CD14-positive monocyte (primary cell): ENCODE measurements at regions of chr16 and their contacts with region 1.

Region 1: DNA sequence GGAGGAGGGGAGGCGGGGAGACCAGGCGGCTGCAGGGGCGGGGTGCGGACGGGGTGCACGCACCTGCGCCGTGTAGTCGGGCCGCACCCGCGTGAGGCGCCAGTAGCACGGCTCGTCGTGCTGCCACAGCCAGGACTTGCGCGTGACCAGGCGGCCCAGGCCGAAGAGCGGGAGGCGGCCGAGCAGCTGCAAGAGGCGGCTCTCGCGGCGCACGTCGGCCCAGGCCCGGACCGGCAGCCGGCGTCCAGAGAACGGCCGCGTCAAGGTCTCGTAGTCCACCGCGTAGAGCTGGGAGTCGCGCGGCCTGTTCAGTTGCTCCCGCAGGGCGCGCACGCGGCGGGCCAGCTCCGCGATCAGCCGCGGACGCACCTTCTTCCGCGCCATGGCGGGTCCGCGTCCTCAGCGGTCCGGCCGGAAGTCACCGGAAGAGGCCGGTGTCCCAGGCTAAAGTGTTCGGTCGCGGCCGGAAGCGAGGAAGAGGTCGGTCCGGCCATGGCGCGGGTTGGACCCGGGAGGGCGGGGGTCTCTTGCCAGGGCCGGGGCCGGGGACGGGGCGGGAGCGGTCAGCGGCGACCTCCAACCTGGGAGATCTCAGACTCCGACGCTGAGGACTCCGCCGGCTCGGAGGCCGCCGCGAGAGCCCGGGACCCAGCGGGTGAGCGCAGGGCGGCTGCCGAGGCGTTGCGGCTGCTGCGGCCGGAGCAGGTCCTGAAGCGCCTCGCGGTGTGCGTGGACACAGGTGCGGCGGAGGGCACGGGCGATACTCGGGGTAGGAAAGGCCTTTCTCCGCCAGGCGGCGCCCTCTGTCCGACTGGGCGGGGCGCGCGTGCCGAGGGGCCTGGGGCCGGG is at the starts of genes EME2 and MRPS34:
- DNase-seq: peak; percentile 72 to 77 (median 76)
- H3K4me3 ChIP-seq: peak within 1 kb of the TSS; percentile 78 to 99 (median 89)
- H3K4me3 Mint-ChIP-seq: peak within 1 kb of the TSS; percentile 90 to 94
- H3K27ac ChIP-seq: peak within 1 kb of the TSS; percentile 39 to 77
- H3K27ac Mint-ChIP-seq: peak within 1 kb of the TSS; percentile 59 to 92 (median 89)
- H3K4me1 ChIP-seq: peaks cover 30 to 45% of the 10 kb centered on the region in 2 donors
- H3K4me1 Mint-ChIP-seq: peaks cover 28% of the 10 kb centered on the region
- H3K27me3 ChIP-seq: no peaks in the 10 kb centered on the region
- H3K27me3 Mint-ChIP-seq: peaks cover 0 to 1% (median 0%) of the 10 kb centered on the region in 3 donors
- CTCF ChIP-seq: peak; percentile 97
- polyA plus RNA-seq, gene EME2: 0.26 to 36.6 (median 0.48) TPM
- polyA plus RNA-seq, gene MRPS34: 34.5 to 137 (median 109) TPM

Region 2: GRCh38 chr16:1420111-1420540 is 352.8 kb before region 1 on chr16:
- intact Hi-C with region 1: loop called in 1 of 2 experiments (anchors 5 kb)
- DNase-seq: no peak
- H3K4me3 ChIP-seq: peak overlapping the region; percentile 64 to 96 (median 69)
- H3K4me3 Mint-ChIP-seq: peak overlapping the region; percentile 86 to 93
- H3K27ac ChIP-seq: peak overlapping the region; percentile 72 to 87
- H3K27ac Mint-ChIP-seq: peak overlapping the region; percentile 72 to 96 (median 94)
- H3K4me1 ChIP-seq: peaks cover 18 to 21% of the 10 kb centered on the region in 2 donors
- H3K4me1 Mint-ChIP-seq: peaks cover 20% of the 10 kb centered on the region
- H3K27me3 ChIP-seq: no peaks in the 10 kb centered on the region
- H3K27me3 Mint-ChIP-seq: no peaks in the 10 kb centered on the region
- CTCF ChIP-seq: no peak

Region 3: DNA sequence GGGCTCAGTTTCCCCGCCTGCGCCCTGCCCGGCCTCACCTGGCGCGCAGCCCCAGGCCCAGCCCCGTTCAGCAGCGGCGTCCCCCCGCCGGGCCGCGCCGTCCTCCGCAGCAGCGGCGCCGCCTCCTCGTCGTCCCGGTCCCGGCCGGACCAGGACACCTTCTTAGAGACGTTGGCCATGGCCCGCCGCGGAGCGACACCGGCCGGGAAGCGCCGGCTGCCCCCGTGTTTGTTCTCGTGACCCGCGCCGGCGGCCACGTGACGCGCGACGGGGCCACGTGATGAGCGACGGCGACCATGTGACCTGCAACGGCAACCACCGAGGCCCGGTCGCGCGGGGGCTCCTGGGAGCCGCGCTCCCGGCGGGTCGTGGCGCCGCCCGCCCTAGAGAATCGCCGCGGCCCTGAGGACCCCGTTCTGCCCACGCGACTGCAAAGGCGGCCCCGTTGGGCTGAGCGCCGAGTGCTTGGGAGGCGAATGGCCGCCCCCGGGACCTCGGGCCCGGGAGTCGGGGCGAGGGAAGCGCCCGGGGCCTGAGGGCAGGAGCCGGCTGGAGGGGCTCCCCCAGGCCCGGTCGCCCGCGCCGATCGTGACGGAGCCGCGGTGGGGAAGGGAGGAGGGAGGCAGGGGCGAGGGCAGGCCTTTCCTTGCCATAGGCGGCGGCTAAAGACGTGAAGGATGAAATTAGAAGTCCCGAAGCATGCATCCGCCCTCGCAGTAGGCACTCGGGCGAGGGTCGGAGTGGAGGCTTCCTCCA is 298.0 kb before region 1 on chr16 and contains the start of gene CLCN7:
- intact Hi-C with region 1: loop called in 1 of 2 experiments (anchors 10 kb)
- DNase-seq: peak; percentile 75 to 89 (median 84)
- H3K4me3 ChIP-seq: peak within 1 kb of the TSS; percentile 61 to 81 (median 77)
- H3K4me3 Mint-ChIP-seq: peak within 1 kb of the TSS; percentile 82 to 93
- H3K27ac ChIP-seq: peak within 1 kb of the TSS; percentile 79 to 99
- H3K27ac Mint-ChIP-seq: peak within 1 kb of the TSS; percentile 87 to 95 (median 91)
- H3K4me1 ChIP-seq: peaks cover 54 to 62% of the 10 kb centered on the region in 2 donors
- H3K4me1 Mint-ChIP-seq: peaks cover 47% of the 10 kb centered on the region
- H3K27me3 ChIP-seq: no peaks in the 10 kb centered on the region
- H3K27me3 Mint-ChIP-seq: peaks cover 0 to 5% (median 0%) of the 10 kb centered on the region in 3 donors
- CTCF ChIP-seq: no peak
- polyA plus RNA-seq, gene CLCN7: 37.4 to 249 (median 56.5) TPM

Region 4: DNA sequence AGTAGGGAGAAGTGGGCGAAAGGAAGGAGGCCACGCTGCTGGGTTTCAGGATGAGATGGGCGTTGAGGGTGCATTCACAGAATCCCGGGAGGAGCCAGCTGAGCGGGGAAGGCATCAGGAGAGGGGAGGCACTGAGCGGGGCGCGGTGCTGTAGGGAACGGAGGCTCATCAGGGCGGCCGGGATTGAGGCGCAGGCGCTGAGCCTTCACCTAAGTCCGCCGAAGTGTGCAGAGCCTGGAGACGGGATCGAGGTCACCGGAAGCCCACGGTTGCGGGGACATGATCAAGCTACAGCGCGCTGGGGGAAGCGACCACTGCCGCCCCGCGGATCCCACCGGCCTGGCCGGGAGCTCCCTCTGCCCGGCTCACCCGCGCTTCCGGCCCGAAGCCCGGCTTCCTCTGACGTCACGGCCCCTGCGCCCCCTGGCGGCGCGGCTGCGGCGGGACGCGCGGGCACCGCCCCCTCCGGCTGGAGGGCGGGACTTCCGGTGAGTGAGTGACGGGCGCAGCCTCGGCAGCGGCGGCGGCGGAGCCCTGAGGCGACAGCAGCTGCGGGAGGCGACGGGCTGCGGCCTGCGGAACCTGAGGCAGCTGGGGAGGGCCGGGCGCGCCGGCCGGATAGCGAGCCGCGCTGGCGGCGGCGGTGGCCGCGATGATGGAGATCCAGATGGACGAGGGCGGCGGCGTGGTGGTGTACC is 67.1 kb before region 1 on chr16 and contains the start of gene MAPK8IP3:
- intact Hi-C with region 1: loop called in 1 of 2 experiments (anchors 10 kb)
- DNase-seq: peak; percentile 86 to 92 (median 87)
- H3K4me3 ChIP-seq: peak within 1 kb of the TSS; percentile 94 to 97 (median 96)
- H3K4me3 Mint-ChIP-seq: peak within 1 kb of the TSS; percentile 96 to 99
- H3K27ac ChIP-seq: peak within 1 kb of the TSS; percentile 72 to 94
- H3K27ac Mint-ChIP-seq: peak within 1 kb of the TSS; percentile 91 to 100 (median 98)
- H3K4me1 ChIP-seq: peaks cover 22 to 26% of the 10 kb centered on the region in 2 donors
- H3K4me1 Mint-ChIP-seq: peaks cover 37% of the 10 kb centered on the region
- H3K27me3 ChIP-seq: no peaks in the 10 kb centered on the region
- H3K27me3 Mint-ChIP-seq: no peaks in the 10 kb centered on the region
- CTCF ChIP-seq: peak; percentile 95
- polyA plus RNA-seq, gene MAPK8IP3: 1.1 to 185 (median 2.1) TPM

Region 5: GRCh38 chr16:1929578-1930337 is 156.8 kb after region 1 on chr16:
- intact Hi-C with region 1: loop called in 1 of 2 experiments (anchors 10 kb)
- DNase-seq: peak; percentile 84 to 91 (median 84)
- H3K4me3 ChIP-seq: peak overlapping the region; percentile 27 to 82 (median 52)
- H3K4me3 Mint-ChIP-seq: peak overlapping the region; percentile 80 to 87
- H3K27ac ChIP-seq: peak overlapping the region; percentile 45 to 59
- H3K27ac Mint-ChIP-seq: no peak overlapping the region
- H3K4me1 ChIP-seq: peaks cover 10 to 18% of the 10 kb centered on the region in 2 donors
- H3K4me1 Mint-ChIP-seq: peaks cover 20% of the 10 kb centered on the region
- H3K27me3 ChIP-seq: no peaks in the 10 kb centered on the region
- H3K27me3 Mint-ChIP-seq: peaks cover 8 to 12% (median 8%) of the 10 kb centered on the region in 3 donors
- CTCF ChIP-seq: peak; percentile 100